CD14-positive monocyte (primary cell): ENCODE measurements at regions of chr11 and their contacts with region 1.

Region 1: DNA sequence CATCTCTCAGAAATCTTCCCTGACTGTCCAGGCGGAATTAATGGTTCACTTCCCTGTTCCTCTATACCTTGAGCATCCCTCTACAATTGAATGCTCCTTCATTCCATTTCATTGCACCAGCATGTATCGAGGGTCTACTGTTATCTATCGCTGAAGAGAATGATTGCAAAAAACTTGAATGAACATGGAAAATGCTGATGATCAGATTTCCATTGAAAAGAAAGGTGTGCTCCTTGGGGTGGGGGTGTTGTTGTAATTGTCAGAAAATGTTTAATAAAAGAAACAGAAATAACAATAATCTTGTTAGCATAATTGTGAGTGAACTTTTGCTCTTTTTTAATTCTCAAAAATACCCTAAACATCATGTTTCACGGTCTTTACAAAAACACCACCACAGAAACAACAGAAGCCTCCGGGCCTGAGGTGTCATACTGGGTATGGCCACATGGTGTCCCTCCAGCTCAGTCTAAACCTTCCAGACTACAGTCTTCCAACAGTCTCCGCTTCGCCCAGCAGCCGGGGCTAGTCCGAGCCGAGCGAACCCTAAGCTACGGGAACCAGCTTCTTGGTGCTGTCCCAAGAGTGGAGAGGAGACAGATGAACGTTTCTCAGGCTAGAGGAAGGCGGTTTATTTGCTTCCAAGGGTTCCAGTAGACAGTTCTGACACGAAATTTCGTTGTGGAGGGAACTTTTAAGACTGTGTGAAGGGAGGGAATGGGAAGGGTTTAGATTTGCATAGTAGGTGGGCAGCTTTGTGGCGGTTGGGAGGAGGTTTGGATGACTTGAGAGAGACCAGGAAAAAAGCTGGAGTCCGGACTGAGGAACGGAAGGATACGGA is 75.8 kb upstream of the ZBED5 start:
- DNase-seq: peak; percentile 82 to 91 (median 83)
- H3K4me3 ChIP-seq: peak overlapping the region in 2 of 3 experiments; percentile 3 to 61
- H3K4me3 Mint-ChIP-seq: peak overlapping the region; percentile 67 to 90
- H3K27ac ChIP-seq: no peak overlapping the region
- H3K27ac Mint-ChIP-seq: peak overlapping the region in 4 of 7 donors; percentile 5 to 68 (median 48)
- H3K4me1 ChIP-seq: peaks cover 15 to 29% of the 10 kb centered on the region in 2 donors
- H3K4me1 Mint-ChIP-seq: peaks cover 18% of the 10 kb centered on the region
- H3K27me3 ChIP-seq: peaks cover 31 to 57% of the 10 kb centered on the region in 2 donors
- H3K27me3 Mint-ChIP-seq: peaks cover 51 to 64% (median 57%) of the 10 kb centered on the region in 3 donors
- CTCF ChIP-seq: peak; percentile 92

Region 2: GRCh38 chr11:10623797-10624761 is 309.6 kb before region 1 on chr11:
- intact Hi-C with region 1: no loop called
- DNase-seq: peak in 1 of 3 donors; percentile 46
- H3K4me3 ChIP-seq: peak overlapping the region in 1 of 3 experiments; percentile 39
- H3K4me3 Mint-ChIP-seq: peak overlapping the region in 1 of 2 donors; percentile 78
- H3K27ac ChIP-seq: peak overlapping the region; percentile 73 to 92
- H3K27ac Mint-ChIP-seq: peak overlapping the region; percentile 95 to 100 (median 97)
- H3K4me1 ChIP-seq: peaks cover 45 to 46% of the 10 kb centered on the region in 2 donors
- H3K4me1 Mint-ChIP-seq: peaks cover 34% of the 10 kb centered on the region
- H3K27me3 ChIP-seq: no peaks in the 10 kb centered on the region
- H3K27me3 Mint-ChIP-seq: peaks cover 0 to 1% (median 0%) of the 10 kb centered on the region in 3 donors
- CTCF ChIP-seq: peak; percentile 15

Region 3: DNA sequence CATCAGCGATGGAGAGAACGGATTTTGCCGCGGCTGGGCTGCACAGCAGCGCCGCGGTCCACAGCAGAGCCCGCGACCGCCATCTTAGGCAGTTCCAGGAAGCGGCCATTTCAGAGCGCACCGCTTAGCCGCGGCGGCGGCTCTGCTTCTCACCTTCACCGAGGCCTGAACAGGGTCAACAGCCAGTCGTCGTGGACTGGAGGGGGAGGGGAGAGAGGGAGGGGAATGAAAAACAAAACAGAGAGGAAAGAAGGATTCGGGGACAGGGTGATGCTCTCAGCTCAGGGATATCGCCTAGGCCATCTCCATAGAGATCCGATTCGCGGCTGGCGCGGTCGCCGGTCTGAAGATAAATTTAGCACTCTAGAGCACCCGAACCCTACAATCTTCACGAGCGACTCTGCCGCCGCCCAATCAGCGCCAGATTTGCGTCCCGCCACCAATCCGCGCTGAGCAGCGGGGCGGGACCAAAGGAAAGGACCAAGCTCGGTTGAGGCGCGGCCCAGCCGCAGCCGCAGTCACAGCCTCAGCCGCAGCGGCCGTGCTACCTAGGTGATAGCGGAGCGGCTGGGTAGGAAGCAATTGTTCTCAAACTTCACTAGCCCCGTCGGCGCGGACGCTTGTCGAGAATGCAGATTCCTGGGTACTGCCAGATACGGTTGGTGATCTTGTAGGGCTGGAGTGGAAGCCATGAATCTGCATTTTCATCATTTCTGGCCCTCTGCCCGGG is 75.8 kb before region 1 on chr11 and contains the start of gene ZBED5:
- intact Hi-C with region 1: loop called in 1 of 2 experiments (anchors 5 kb)
- DNase-seq: peak; percentile 93 to 96 (median 94)
- H3K4me3 ChIP-seq: peak within 1 kb of the TSS; percentile 78 to 91 (median 91)
- H3K4me3 Mint-ChIP-seq: peak within 1 kb of the TSS; percentile 98 to 100
- H3K27ac ChIP-seq: peak within 1 kb of the TSS; percentile 94 to 95
- H3K27ac Mint-ChIP-seq: peak within 1 kb of the TSS; percentile 99 to 100 (median 99)
- H3K4me1 ChIP-seq: peaks cover 20 to 30% of the 10 kb centered on the region in 2 donors
- H3K4me1 Mint-ChIP-seq: peaks cover 21% of the 10 kb centered on the region
- H3K27me3 ChIP-seq: no peaks in the 10 kb centered on the region
- H3K27me3 Mint-ChIP-seq: peaks cover 0 to 3% (median 0%) of the 10 kb centered on the region in 3 donors
- CTCF ChIP-seq: no peak
- polyA plus RNA-seq, gene ZBED5: 8.1 to 45.8 (median 10.3) TPM

Region 4: GRCh38 chr11:10878408-10879214 is 55.1 kb before region 1 on chr11:
- intact Hi-C with region 1: loop called (anchors 5 kb)
- DNase-seq: peak; percentile 75 to 82 (median 78)
- H3K4me3 ChIP-seq: no peak overlapping the region
- H3K4me3 Mint-ChIP-seq: no peak overlapping the region
- H3K27ac ChIP-seq: peak overlapping the region in 1 of 2 donors; percentile 61
- H3K27ac Mint-ChIP-seq: peak overlapping the region; percentile 75 to 90 (median 77)
- H3K4me1 ChIP-seq: peaks cover 3 to 7% of the 10 kb centered on the region in 2 donors
- H3K4me1 Mint-ChIP-seq: peaks cover 9% of the 10 kb centered on the region
- H3K27me3 ChIP-seq: no peaks in the 10 kb centered on the region
- H3K27me3 Mint-ChIP-seq: no peaks in the 10 kb centered on the region
- CTCF ChIP-seq: peak; percentile 86

Region 5: DNA sequence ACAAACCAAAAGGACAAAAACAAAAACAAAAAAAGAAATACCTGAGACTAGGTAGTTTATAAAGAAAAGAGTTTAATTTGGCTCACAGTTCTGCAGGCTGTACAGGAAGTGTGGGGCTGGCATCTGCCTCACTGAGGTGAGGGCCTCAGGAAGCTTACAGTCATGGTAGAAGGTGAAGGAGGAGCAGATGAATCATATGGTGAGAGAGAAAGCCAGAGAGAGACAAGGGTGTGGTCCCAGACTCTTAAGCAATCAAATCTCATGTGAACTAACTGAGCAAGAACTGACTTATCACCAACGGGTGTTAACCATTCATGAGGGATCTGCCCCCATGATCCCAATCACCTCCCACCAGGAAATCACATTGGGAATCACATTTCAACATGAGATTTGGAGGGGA is 17.0 kb before region 1 on chr11:
- intact Hi-C with region 1: loop called in 1 of 2 experiments (anchors 2 kb)
- DNase-seq: peak; percentile 62 to 83 (median 81)
- H3K4me3 ChIP-seq: no peak overlapping the region
- H3K4me3 Mint-ChIP-seq: no peak overlapping the region
- H3K27ac ChIP-seq: peak overlapping the region in 1 of 2 donors; percentile 69
- H3K27ac Mint-ChIP-seq: peak overlapping the region in 6 of 7 donors; percentile 67 to 84 (median 76)
- H3K4me1 ChIP-seq: peaks cover 26 to 49% of the 10 kb centered on the region in 2 donors
- H3K4me1 Mint-ChIP-seq: peaks cover 49% of the 10 kb centered on the region
- H3K27me3 ChIP-seq: no peaks in the 10 kb centered on the region
- H3K27me3 Mint-ChIP-seq: peaks cover 1 to 4% (median 2%) of the 10 kb centered on the region in 3 donors
- CTCF ChIP-seq: no peak

Region 6: GRCh38 chr11:10943968-10944367 is 10.3 kb after region 1 on chr11:
- intact Hi-C with region 1: no loop called
- DNase-seq: no peak
- H3K4me3 ChIP-seq: no peak overlapping the region
- H3K4me3 Mint-ChIP-seq: no peak overlapping the region
- H3K27ac ChIP-seq: no peak overlapping the region
- H3K27ac Mint-ChIP-seq: no peak overlapping the region
- H3K4me1 ChIP-seq: no peaks in the 10 kb centered on the region
- H3K4me1 Mint-ChIP-seq: peaks cover 6% of the 10 kb centered on the region
- H3K27me3 ChIP-seq: no peaks in the 10 kb centered on the region
- H3K27me3 Mint-ChIP-seq: peaks cover 0 to 1% (median under 1%) of the 10 kb centered on the region in 3 donors
- CTCF ChIP-seq: no peak

Region 7: DNA sequence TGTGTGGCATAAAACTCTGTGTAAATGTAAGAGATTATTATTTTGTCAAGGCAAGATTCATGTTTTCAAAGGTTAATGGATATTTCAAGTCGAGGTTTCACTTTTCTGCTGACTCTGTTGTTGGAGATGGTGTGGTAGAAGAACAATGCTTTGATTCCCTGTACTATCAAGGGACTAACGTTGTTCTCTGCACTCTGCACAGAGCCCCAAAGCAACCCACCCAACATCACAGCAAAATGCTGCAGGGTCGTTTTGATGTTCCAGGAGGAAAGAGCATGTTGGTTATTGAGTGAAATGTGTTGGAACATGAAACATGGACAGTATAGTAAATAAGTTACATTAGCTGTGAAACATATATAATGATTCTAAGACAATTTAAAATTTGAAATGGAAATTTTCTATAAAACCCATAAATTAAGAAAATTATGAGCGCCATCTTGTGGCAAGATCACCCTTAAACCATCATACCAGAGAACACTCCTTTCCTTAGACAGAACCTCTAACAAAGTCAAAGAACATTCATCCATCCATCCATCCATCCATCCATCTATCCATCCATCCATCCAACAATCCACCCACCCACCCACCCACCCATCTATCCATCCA is 88.6 kb after region 1 on chr11:
- intact Hi-C with region 1: loop called (anchors 2 to 5 kb)
- DNase-seq: peak in 2 of 3 donors; percentile 17 to 47
- H3K4me3 ChIP-seq: no peak overlapping the region
- H3K4me3 Mint-ChIP-seq: no peak overlapping the region
- H3K27ac ChIP-seq: no peak overlapping the region
- H3K27ac Mint-ChIP-seq: no peak overlapping the region
- H3K4me1 ChIP-seq: no peaks in the 10 kb centered on the region
- H3K4me1 Mint-ChIP-seq: peaks cover 4% of the 10 kb centered on the region
- H3K27me3 ChIP-seq: peaks cover 0 to 3% of the 10 kb centered on the region in 2 donors
- H3K27me3 Mint-ChIP-seq: peaks cover 0 to 2% (median 2%) of the 10 kb centered on the region in 3 donors
- CTCF ChIP-seq: peak; percentile 69

Region 8: GRCh38 chr11:11171854-11172253 is 238.2 kb after region 1 on chr11:
- intact Hi-C with region 1: no loop called
- DNase-seq: no peak
- H3K4me3 ChIP-seq: no peak overlapping the region
- H3K4me3 Mint-ChIP-seq: no peak overlapping the region
- H3K27ac ChIP-seq: no peak overlapping the region
- H3K27ac Mint-ChIP-seq: peak overlapping the region in 1 of 7 donors; percentile 35
- H3K4me1 ChIP-seq: no peaks in the 10 kb centered on the region
- H3K4me1 Mint-ChIP-seq: no peaks in the 10 kb centered on the region
- H3K27me3 ChIP-seq: no peaks in the 10 kb centered on the region
- H3K27me3 Mint-ChIP-seq: peaks cover 0 to 10% (median 3%) of the 10 kb centered on the region in 3 donors
- CTCF ChIP-seq: no peak

Region 9: GRCh38 chr11:11787305-11788062 is 853.8 kb after region 1 on chr11:
- intact Hi-C with region 1: loop called (anchors 5 to 10 kb)
- DNase-seq: peak; percentile 55 to 66 (median 64)
- H3K4me3 ChIP-seq: no peak overlapping the region
- H3K4me3 Mint-ChIP-seq: no peak overlapping the region
- H3K27ac ChIP-seq: no peak overlapping the region
- H3K27ac Mint-ChIP-seq: peak overlapping the region in 1 of 7 donors; percentile 53
- H3K4me1 ChIP-seq: no peaks in the 10 kb centered on the region
- H3K4me1 Mint-ChIP-seq: peaks cover 6% of the 10 kb centered on the region
- H3K27me3 ChIP-seq: peaks cover under 1 to 2% of the 10 kb centered on the region in 2 donors
- H3K27me3 Mint-ChIP-seq: peaks cover 2 to 12% (median 10%) of the 10 kb centered on the region in 3 donors
- CTCF ChIP-seq: peak; percentile 83